ENCODE measurements at regions of chr16 and their contacts with region 1.

Region 1: DNA sequence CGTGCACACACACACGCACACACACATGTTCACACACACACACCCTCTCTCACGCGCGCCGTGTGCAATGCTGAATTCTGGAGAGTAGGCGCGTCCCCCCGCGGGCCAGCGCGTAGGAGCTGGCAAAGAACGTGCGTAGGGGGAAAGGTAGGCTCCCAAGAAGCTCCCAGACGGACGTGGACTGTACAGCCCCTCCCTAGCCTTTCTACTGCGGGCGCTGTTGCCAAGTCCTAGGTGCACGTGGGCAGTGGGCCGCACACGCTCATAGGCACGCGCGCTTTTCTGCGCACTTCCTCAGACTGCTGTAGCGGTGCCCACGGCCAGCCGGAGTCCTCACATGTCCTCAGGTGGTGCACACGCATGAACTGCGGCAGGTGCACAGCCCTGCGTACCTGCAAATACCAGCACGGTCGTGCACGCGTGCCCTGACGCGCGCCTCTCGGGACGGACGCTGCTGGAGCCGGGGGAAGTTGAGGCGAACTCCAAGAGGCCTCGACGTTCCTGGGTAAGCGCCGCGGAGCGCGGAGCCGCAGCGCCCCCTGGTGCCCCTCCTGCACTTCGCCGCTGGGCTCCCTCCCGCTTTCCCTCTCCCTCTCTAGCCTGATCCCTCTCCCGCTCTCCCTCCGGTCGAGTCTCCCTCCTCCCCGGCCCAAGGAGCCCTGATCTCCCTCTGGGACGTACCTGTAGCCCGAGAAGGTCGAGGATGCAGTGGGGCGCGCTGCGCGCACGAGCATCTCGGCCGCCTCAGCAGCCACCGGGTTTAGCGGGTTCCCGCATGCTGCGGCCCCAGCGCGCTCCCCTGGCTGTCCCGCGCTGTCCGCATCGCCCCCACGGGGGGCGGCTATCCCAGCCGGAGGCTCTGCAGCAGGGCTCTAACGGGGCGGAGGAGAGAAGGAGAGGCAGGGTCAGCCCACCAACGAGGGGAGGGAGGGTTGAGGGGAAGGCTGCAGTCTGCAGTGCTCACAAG is 749 bp downstream of the GRIN2A start:
- DNase-seq: peak; percentile 62 to 69
- ATAC-seq: peak; percentile 92 to 97
- H3K4me3 ChIP-seq: peak overlapping the region; percentile 35
- H3K27ac ChIP-seq: no peak overlapping the region
- H3K4me1 ChIP-seq: peaks cover 10% of the 10 kb centered on the region; the same call in 2 of the 3 replicates
- CTCF ChIP-seq: peak; percentile 83
- EP300 ChIP-seq: no peak
- POLR2A ChIP-seq: no peak
- RAD21 ChIP-seq: peak; percentile 76 to 89

Region 2: GRCh38 chr16:9159839-9160550 is 1021.5 kb before region 1 on chr16:
- CTCF ChIA-PET with region 1: interaction called, 27 read pairs
- POLR2A ChIA-PET with region 1: no interaction called
- DNase-seq: peak; percentile 62 to 83
- ATAC-seq: peak; percentile 99
- H3K4me3 ChIP-seq: no peak overlapping the region
- H3K27ac ChIP-seq: no peak overlapping the region
- H3K4me1 ChIP-seq: no peaks in the 10 kb centered on the region
- CTCF ChIP-seq: peak; percentile 74
- EP300 ChIP-seq: no peak
- POLR2A ChIP-seq: no peak
- RAD21 ChIP-seq: peak; percentile 87 to 92

Region 3: GRCh38 chr16:9258423-9259051 is 922.9 kb before region 1 on chr16:
- CTCF ChIA-PET with region 1: interaction called, 15 read pairs
- POLR2A ChIA-PET with region 1: no interaction called
- DNase-seq: peak; percentile 52 to 54
- ATAC-seq: peak; percentile 76 to 90
- H3K4me3 ChIP-seq: no peak overlapping the region
- H3K27ac ChIP-seq: no peak overlapping the region
- H3K4me1 ChIP-seq: no peaks in the 10 kb centered on the region
- CTCF ChIP-seq: peak; percentile 70
- EP300 ChIP-seq: no peak
- POLR2A ChIP-seq: no peak
- RAD21 ChIP-seq: peak; percentile 78 to 87

Region 4: DNA sequence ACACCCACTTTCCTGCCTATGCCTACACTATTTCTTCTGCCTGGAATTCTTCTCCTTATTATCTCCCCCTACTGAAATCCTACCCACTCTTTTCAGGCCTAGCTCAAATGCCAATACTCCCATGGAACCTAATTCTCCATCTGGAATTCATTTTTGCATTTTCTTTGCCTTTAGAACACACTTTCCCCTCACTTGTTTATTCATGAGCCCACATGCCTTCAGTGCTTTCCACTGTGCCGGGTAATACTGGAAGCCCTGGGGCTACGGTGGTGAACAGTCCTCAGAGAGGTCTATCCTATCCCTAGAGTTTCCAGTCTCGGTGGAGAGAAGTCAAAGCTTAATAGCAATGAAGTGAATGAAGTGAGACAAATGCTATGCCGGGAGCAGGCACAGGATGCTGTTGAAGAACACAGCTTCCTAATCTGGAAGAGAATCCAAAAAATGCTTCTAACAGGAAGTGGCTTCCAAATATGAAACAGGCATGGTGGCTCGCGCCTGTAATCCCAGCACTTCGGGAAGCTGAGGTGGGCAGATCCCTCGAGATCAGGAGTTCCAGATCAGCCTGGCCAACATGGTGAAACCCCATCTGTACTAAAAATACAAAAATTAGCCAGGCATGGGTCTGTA is 321.7 kb before region 1 on chr16:
- CTCF ChIA-PET with region 1: no interaction called
- POLR2A ChIA-PET with region 1: no interaction called
- DNase-seq: no peak
- ATAC-seq: no peak
- H3K4me3 ChIP-seq: no peak overlapping the region
- H3K27ac ChIP-seq: no peak overlapping the region
- H3K4me1 ChIP-seq: no peaks in the 10 kb centered on the region
- CTCF ChIP-seq: no peak
- EP300 ChIP-seq: no peak
- POLR2A ChIP-seq: no peak
- RAD21 ChIP-seq: no peak

Region 5: DNA sequence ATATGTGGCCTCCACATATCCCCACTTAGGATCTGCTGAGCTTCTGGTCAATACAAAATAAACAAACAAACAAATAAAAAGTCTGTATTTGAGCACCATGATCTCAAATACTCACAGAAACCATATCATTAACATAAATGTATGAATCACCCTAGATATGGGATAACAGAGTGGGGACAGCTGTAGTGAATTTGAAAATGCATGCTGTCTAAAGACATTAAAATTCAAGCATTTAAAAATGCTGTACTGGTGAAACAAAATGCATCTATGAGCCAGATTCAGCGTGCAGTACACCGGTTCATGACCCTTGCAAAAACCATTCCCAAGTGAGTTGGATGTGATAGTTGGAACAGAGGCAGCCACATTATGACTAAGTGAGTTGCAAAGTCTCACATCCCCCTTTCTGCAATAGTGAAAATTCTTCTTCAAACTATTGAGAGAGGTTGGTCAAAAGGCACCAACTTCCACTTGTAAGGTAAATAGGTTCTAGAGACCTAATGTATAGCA is 11.5 kb before region 1 on chr16:
- CTCF ChIA-PET with region 1: interaction called, 11 read pairs
- POLR2A ChIA-PET with region 1: no interaction called
- DNase-seq: no peak
- ATAC-seq: no peak
- H3K4me3 ChIP-seq: no peak overlapping the region
- H3K27ac ChIP-seq: no peak overlapping the region
- H3K4me1 ChIP-seq: no peaks in the 10 kb centered on the region
- CTCF ChIP-seq: no peak
- EP300 ChIP-seq: no peak
- POLR2A ChIP-seq: no peak
- RAD21 ChIP-seq: no peak

Region 6: GRCh38 chr16:10202650-10203049 is 21.2 kb after region 1 on chr16:
- CTCF ChIA-PET with region 1: no interaction called
- POLR2A ChIA-PET with region 1: no interaction called
- DNase-seq: no peak
- ATAC-seq: no peak
- H3K4me3 ChIP-seq: no peak overlapping the region
- H3K27ac ChIP-seq: no peak overlapping the region
- H3K4me1 ChIP-seq: no peaks in the 10 kb centered on the region
- CTCF ChIP-seq: no peak
- EP300 ChIP-seq: no peak
- POLR2A ChIP-seq: no peak
- RAD21 ChIP-seq: no peak

Region 7: DNA sequence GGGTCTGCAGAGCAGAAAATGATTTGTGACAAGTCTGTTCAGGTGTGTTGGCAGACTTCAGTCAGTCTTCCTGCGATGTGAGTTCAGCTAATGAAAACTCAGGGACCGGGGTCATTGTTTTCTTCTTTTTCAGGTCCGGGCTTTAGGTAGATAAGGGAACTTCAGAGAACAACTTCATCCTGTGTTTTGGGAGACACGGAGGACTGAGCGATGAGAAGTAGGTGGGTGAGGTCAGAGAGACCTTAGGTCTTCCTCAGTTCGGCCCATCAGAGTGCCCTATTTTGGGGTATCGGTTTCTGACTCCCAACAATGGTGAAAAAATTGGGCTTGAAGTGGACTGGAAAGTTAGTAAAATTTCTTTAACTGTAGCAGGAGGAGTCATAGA is 115.5 kb after region 1 on chr16:
- CTCF ChIA-PET with region 1: no interaction called
- POLR2A ChIA-PET with region 1: no interaction called
- DNase-seq: no peak
- ATAC-seq: no peak
- H3K4me3 ChIP-seq: no peak overlapping the region
- H3K27ac ChIP-seq: no peak overlapping the region
- H3K4me1 ChIP-seq: no peaks in the 10 kb centered on the region
- CTCF ChIP-seq: no peak
- EP300 ChIP-seq: no peak
- POLR2A ChIP-seq: no peak
- RAD21 ChIP-seq: no peak